Calu3 (cell line): ENCODE measurements at regions of chr6 and their contacts with region 1.

Region 1: DNA sequence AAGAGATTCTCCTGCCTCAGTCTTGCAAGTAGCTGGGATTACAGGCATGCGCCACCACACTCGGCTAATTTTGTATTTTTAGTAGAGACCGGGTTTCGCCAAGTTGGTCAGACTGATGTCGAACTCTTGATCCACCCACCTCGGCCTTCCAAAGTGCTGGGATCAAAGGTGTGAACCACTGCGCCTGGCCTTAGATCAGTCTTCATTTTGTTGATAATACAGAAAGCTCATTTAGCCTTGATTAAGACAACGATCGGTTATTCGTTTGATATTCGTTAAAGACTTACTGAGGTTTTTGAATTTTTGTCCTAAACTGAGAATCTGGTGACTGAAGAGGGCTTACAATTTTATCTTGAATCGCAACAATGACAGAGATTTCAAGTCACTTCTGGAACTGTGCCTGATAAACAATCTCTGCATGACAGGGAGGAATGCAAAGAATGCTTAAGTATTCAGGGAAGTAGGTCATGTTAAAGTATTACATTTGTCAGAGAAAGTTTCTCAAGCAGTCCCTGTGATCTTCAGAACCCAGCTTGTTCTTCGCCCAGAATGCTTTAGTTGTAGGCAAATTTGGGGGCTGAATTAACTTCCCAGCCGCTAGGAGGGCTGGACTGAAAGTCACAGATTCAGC is 14.8 kb downstream of the AKAP12 start:
- DNase-seq: peak; percentile 2
- H3K4me3 Mint-ChIP-seq: no peak overlapping the region
- H3K27ac Mint-ChIP-seq: no peak overlapping the region
- H3K4me1 Mint-ChIP-seq: peaks cover 10% of the 10 kb centered on the region
- H3K27me3 Mint-ChIP-seq: no peaks in the 10 kb centered on the region
- CTCF ChIP-seq: no peak

Region 2: DNA sequence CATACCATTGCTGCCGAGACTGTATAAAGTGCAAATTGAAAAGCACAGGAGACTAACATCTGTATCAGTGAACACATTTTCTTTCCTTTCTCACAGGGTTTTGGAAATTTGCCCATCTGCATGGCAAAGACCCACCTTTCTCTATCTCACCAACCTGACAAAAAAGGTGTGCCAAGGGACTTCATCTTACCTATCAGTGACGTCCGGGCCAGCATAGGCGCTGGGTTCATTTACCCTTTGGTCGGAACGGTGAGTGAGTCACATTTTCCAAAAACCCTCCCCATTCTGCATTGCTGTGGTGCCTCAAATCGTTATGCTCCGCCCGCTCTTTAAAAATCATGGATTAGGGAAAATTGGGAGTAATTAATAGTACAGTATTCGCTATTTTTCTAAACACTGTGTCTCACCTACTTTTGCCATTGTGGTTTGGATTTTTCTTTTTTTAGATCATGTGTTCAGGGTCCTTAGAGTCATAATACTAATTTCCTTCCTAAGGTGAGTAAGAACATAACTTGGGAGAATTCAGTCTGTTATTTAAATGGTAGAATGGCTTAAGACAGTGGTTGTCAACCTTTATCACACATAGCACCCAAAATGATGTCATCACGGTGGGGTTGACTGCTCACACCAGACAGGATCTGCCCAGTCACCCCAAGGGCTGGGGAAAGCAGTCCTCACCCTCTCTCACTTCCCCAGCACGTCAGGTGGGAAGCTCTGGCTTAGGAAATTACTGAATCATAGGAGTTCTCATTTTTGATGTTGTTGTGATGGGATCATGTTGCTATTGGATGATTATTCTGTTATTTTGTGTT is 217.5 kb before region 1 on chr6:
- CTCF ChIA-PET with region 1: no interaction called
- intact Hi-C with region 1: no loop called
- DNase-seq: no peak
- H3K4me3 Mint-ChIP-seq: peak overlapping the region; percentile 46
- H3K27ac Mint-ChIP-seq: peak overlapping the region; percentile 98
- H3K4me1 Mint-ChIP-seq: peaks cover 56% of the 10 kb centered on the region
- H3K27me3 Mint-ChIP-seq: no peaks in the 10 kb centered on the region
- CTCF ChIP-seq: no peak

Region 3: DNA sequence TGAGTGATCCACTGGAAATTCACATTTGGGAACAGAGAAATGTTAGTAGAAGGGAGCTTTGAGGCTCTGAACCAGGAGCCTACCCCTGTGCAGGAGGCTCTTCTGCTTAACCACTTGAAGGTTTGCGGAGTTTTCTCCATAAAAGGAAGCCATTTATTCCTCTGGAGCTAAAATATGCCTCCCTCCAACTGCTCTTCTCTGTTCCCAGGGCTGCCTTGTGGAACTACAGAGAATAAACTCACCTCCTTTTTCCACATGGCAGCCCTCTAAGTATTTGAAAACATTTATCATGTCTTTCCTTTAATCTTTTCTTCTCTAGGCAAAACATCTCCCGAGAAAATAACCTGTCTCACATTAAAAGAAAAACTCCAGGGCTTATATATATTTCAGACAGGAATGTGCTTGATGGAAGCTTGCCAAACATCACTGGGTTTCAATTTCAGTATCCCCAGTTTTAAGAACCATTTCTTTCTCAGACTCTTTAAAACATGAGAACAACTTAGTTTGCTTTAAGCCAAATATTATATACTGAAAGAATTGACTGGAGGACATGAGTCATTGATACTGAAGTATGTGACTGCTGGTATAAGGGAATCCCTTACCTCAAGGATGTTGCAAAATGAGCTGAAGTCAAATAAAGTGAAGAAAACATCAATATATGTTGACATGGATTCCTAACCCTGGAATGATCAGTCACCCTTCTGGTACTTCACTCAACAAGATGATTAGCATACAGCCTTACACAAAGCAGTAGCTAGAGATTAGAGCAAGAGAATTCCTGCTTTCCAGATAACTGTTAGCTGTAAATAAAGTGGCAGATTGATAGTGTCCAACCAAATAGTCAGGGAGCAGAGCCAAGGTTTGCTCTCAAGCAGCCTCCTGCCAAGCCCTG is 62.8 kb after region 1 on chr6:
- CTCF ChIA-PET with region 1: no interaction called
- intact Hi-C with region 1: loop called (anchors 10 kb)
- DNase-seq: no peak
- H3K4me3 Mint-ChIP-seq: no peak overlapping the region
- H3K27ac Mint-ChIP-seq: no peak overlapping the region
- H3K4me1 Mint-ChIP-seq: peaks cover 8% of the 10 kb centered on the region
- H3K27me3 Mint-ChIP-seq: no peaks in the 10 kb centered on the region
- CTCF ChIP-seq: no peak